H1 (cell line): ENCODE measurements at regions of chr2 and their contacts with region 1.

Region 1: GRCh38 chr2:27409321-27410073 is at the start of gene PPM1G:
- DNase-seq: peak; percentile 87 to 99
- H3K4me3 ChIP-seq: peak within 1 kb of the TSS; percentile 68 to 96 (median 92)
- H3K27ac ChIP-seq: peak within 1 kb of the TSS; percentile 78
- H3K4me1 ChIP-seq: peaks cover 0 to 5% (median 3%) of the 10 kb centered on the region in 4 experiments; a peak in 4 of 7 replicates
- H3K27me3 ChIP-seq: no peaks in the 10 kb centered on the region
- CTCF ChIP-seq: no peak
- EP300 ChIP-seq: no peak
- POLR2A ChIP-seq: peak; percentile 87 to 92
- RAD21 ChIP-seq: no peak
- total RNA-seq, gene PPM1G: 201 and 203 TPM in 2 replicates

Region 2: GRCh38 chr2:27356382-27357181 is 52.9 kb before region 1 on chr2 and contains the start of gene GTF3C2:
- CTCF ChIA-PET with region 1: no interaction called
- POLR2A ChIA-PET with region 1: interaction called, 12 read pairs
- DNase-seq: peak; percentile 92 to 93
- H3K4me3 ChIP-seq: peak within 1 kb of the TSS; percentile 68 to 97 (median 90)
- H3K27ac ChIP-seq: peak within 1 kb of the TSS; percentile 95
- H3K4me1 ChIP-seq: peaks cover 0 to 12% (median 4%) of the 10 kb centered on the region in 4 experiments; a peak in 4 of 7 replicates
- H3K27me3 ChIP-seq: no peaks in the 10 kb centered on the region
- CTCF ChIP-seq: no peak
- EP300 ChIP-seq: no peak
- POLR2A ChIP-seq: peak; percentile 59 to 91
- RAD21 ChIP-seq: no peak
- total RNA-seq, gene GTF3C2: 118 and 129 TPM in 2 replicates

Region 3: DNA sequence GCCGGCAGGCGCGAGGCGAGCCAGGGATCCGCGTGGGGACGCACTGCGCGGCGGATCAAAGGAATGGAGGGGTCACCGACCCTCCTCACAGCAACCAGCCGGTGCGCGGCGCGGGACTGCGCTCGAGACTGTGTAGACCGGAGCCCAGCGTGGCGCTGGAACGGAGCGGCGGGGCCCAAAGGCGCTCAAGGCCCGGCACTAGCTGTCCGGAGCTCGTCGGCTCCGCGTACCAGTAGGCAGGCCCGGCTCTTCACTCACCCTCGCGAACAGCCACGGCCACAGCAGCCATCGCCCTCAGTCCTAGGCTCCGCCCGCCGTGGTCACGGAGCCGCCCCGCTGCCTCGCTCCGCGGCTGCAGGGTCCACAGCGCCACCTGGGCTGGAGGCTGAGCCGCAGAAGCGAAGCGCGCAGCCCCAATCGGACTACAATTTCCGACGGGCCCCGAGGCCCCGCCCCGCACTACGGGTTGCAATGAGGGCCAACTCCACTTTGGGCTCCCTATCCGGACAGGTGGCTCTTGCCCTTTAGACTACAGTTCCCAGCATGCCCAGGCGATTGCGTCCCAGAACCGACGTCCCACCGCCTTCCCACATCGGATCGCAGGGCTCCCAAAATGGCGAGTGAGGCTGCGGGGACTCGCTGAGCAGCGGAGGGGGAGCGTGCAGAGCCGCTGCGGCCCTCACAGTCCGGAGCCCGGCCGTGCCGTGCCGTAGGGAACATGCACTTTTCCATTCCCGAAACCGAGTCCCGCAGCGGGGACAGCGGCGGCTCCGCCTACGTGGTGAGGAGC is 39.3 kb before region 1 on chr2 and contains the starts of genes EIF2B4 and SNX17:
- CTCF ChIA-PET with region 1: no interaction called
- POLR2A ChIA-PET with region 1: interaction called, 25 read pairs
- DNase-seq: peak; percentile 98 to 99
- H3K4me3 ChIP-seq: peak within 1 kb of the TSS; percentile 72 to 99 (median 88)
- H3K27ac ChIP-seq: peak within 1 kb of the TSS; percentile 62
- H3K4me1 ChIP-seq: peaks cover 0 to 4% (median 2%) of the 10 kb centered on the region in 4 experiments; a peak in 4 of 7 replicates
- H3K27me3 ChIP-seq: no peaks in the 10 kb centered on the region
- CTCF ChIP-seq: peak in 2 of 3 experiments; percentile 71 to 87; a peak in 3 of 4 replicates
- EP300 ChIP-seq: peak in 1 of 2 experiments; percentile 42; a peak in 1 of 3 replicates
- POLR2A ChIP-seq: peak in 1 of 2 experiments; percentile 84; a peak in 2 of 3 replicates
- RAD21 ChIP-seq: peak; percentile 50 to 58; a peak in 3 of 4 replicates
- total RNA-seq, gene EIF2B4: 63.2 and 66.0 TPM in 2 replicates
- total RNA-seq, gene SNX17: 54.9 and 59.1 TPM in 2 replicates

Region 4: DNA sequence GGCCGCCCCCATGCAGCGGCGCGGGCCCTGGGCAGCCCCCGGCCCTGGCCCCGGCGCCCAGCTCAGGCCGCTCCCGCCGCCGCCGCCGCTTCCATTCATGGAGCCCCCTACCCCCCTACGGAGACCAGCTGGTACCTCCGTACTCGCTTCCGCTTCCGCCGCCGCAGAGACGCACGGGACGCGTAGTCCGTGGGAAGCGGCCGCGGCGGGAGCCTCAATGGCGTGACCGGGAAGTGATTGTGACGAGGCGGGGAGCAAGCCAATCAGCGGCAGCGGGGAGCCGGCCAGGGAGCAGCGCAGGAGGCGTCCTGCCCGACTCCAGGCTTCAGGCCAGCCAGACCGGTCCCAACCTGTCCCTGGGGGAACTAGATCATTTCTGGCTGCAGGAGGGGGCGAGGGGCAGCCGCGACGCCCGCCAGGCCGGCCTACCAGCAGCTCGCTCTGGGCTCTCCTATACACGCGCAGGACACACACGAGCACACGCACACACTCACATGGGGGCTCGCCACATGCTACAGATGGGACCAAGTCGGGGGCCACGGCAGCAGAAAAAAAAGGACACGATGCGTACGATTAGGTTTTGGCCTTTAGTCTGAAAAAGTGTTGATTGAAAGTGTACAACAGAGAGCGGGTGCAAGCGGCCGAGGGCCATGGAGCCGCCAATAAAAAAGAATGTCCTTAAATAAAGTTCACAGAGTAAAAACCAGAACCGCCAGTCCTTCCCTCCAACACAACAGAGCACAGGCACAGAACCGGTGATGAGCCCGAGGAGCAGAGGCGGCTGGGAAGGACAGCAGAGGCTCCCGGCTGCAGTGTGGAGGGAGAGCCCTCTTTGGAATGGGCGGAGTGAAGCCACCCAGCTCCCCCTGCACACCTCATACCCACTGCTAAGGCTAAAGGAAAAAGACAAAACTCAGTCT is 28.6 kb before region 1 on chr2 and contains the start of gene ZNF513:
- CTCF ChIA-PET with region 1: interaction called, 5 read pairs
- POLR2A ChIA-PET with region 1: interaction called, 34 read pairs
- DNase-seq: peak; percentile 91 to 94
- H3K4me3 ChIP-seq: peak within 1 kb of the TSS; percentile 65 to 96 (median 82)
- H3K27ac ChIP-seq: peak within 1 kb of the TSS; percentile 93
- H3K4me1 ChIP-seq: peaks cover 0 to 8% (median 2%) of the 10 kb centered on the region in 4 experiments; a peak in 5 of 7 replicates
- H3K27me3 ChIP-seq: no peaks in the 10 kb centered on the region
- CTCF ChIP-seq: no peak
- EP300 ChIP-seq: peak; percentile 15 to 94
- POLR2A ChIP-seq: peak in 1 of 2 experiments; percentile 84; a peak in 2 of 3 replicates
- RAD21 ChIP-seq: peak in 1 of 2 experiments; percentile 5; a peak in 1 of 4 replicates
- total RNA-seq, gene ZNF513: 17.3 and 18.8 TPM in 2 replicates

Region 5: GRCh38 chr2:27421028-27421427 is 11.5 kb after region 1 on chr2:
- CTCF ChIA-PET with region 1: interaction called, 6 read pairs
- POLR2A ChIA-PET with region 1: interaction called, 26 read pairs
- DNase-seq: no peak
- H3K4me3 ChIP-seq: no peak overlapping the region
- H3K27ac ChIP-seq: no peak overlapping the region
- H3K4me1 ChIP-seq: no peaks in the 10 kb centered on the region
- H3K27me3 ChIP-seq: no peaks in the 10 kb centered on the region
- CTCF ChIP-seq: no peak
- EP300 ChIP-seq: no peak
- POLR2A ChIP-seq: no peak
- RAD21 ChIP-seq: no peak

Region 6: GRCh38 chr2:27428213-27428977 is 18.9 kb after region 1 on chr2 and contains the start of gene NRBP1:
- CTCF ChIA-PET with region 1: interaction called, 16 read pairs
- POLR2A ChIA-PET with region 1: interaction called, 48 read pairs
- DNase-seq: peak; percentile 71 to 96
- H3K4me3 ChIP-seq: peak within 1 kb of the TSS; percentile 83 to 94 (median 91)
- H3K27ac ChIP-seq: peak within 1 kb of the TSS; percentile 85
- H3K4me1 ChIP-seq: no peaks in the 10 kb centered on the region; a peak in 2 of 7 replicates
- H3K27me3 ChIP-seq: no peaks in the 10 kb centered on the region
- CTCF ChIP-seq: peak in 1 of 3 experiments; percentile 11; a peak in 1 of 4 replicates
- EP300 ChIP-seq: peak in 1 of 2 experiments; percentile 34; a peak in 1 of 3 replicates
- POLR2A ChIP-seq: peak; percentile 61 to 80
- RAD21 ChIP-seq: no peak
- total RNA-seq, gene NRBP1: 115 TPM in 2 replicates

Region 7: GRCh38 chr2:27494944-27495554 is 85.6 kb after region 1 on chr2 and contains the start of gene FNDC4:
- CTCF ChIA-PET with region 1: no interaction called
- POLR2A ChIA-PET with region 1: interaction called, 10 read pairs
- DNase-seq: peak in 1 of 2 experiments; percentile 78
- H3K4me3 ChIP-seq: peak within 1 kb of the TSS; percentile 52 to 96 (median 76)
- H3K27ac ChIP-seq: no peak within 1 kb of the TSS; the same call in 1 of the 2 replicates
- H3K4me1 ChIP-seq: peaks cover 3 to 11% (median 4%) of the 10 kb centered on the region in 4 experiments
- H3K27me3 ChIP-seq: peaks cover 0 to 9% (median 7%) of the 10 kb centered on the region in 4 experiments; a peak in 5 of 7 replicates
- CTCF ChIP-seq: no peak
- EP300 ChIP-seq: no peak
- POLR2A ChIP-seq: no peak
- RAD21 ChIP-seq: no peak
- total RNA-seq, gene FNDC4: 13.4 and 14.7 TPM in 2 replicates